ENCODE measurements at regions of chr1 and their contacts with region 1.

Region 1: DNA sequence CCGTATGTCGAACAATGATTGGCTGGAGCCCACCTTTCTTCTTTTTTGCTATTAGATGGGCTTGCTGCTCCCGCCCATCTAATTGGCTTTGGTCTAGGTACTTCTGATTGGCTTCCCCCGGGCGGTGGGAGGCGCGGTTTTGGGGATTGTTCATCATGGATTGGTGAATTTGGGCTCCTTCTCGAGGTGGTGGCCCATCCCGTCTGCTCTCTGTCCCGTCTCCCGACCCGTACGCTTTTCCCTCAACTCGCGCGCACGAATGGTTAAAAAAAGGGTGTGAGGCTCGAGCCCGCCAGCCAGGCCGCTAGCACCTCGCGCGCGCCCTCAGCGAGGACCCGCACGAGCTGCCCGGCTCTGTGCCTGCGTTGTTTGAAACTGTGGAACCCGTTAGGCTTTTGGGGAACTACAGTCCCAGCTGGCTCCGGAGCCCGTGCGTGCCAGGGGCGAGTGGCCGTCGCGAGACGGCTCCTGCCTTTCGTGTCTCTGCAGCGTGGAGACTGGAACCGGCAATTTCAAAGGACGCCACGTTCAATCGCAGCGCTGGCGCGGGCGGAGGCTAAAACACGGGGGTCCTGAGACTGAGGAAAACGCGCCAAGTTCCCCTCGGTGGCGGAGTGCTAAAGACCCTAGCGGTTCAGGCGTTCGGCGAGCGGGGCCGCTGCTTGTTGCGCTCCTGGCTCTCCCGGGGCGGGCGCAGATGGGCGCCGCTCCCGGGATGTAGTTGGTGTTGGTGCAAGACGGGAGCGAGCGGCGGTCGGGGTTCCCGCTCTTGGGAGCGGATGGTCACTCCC is at the start of gene USP1:
- DNase-seq: peak; percentile 86
- ATAC-seq: peak; percentile 82
- H3K4me3 Mint-ChIP-seq: peak within 1 kb of the TSS; percentile 96
- H3K27ac Mint-ChIP-seq: peak within 1 kb of the TSS; percentile 99
- H3K4me1 Mint-ChIP-seq: peaks cover 57% of the 10 kb centered on the region
- H3K27me3 Mint-ChIP-seq: no peaks in the 10 kb centered on the region
- CTCF ChIP-seq: no peak
- total RNA-seq, gene USP1: 32.1 and 33.3 TPM in 2 replicates

Region 2: DNA sequence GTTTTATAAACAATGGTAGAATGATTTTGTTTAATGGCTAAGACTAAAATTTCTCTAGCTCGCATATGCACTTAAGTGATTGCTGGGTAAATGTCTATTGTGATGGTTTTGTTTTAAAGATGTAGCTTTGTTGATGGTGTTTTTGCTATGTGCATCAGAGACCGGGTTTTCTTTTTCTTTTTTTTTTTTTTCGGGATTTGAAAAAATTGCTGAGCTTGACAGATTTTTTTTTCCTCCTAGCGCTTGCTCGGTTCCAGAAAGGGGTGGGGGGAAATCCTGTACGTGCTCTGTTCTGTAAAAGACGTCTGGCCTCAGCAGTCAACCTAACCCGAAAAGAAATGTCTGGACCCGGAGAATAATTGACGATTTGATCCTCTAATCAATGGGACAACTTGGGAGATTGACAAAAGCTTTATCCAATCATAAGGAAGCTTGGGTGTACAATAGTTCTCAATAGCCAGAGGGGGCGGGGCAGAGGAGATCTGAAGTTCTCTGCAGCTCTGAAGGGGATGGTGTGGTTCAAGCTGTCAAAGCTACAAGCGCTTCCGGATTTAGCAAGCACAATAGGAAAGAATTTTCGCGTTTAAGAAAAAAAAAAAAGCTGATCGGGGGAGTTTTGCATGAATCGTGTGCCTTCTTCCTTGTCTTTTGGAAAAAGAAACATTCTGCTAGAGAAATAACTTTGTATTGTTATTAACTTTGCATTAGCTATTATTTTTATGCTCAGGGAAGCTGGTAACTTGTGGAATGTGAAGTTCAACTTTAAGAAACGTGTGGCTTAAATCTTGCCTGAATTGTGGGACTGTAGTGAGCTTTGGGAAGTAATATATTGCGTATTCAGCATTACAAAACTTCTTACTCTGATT is 1358.8 kb before region 1 on chr1:
- CTCF ChIA-PET with region 1: no interaction called
- POLR2A ChIA-PET with region 1: no interaction called
- intact Hi-C with region 1: loop called (anchors 1 kb)
- DNase-seq: peak; percentile 38
- ATAC-seq: peak; percentile 62
- H3K4me3 Mint-ChIP-seq: peak overlapping the region; percentile 95
- H3K27ac Mint-ChIP-seq: peak overlapping the region; percentile 90
- H3K4me1 Mint-ChIP-seq: peaks cover 32% of the 10 kb centered on the region
- H3K27me3 Mint-ChIP-seq: peaks cover 33% of the 10 kb centered on the region
- CTCF ChIP-seq: no peak

Region 3: GRCh38 chr1:62424411-62424810 is 12.2 kb before region 1 on chr1:
- CTCF ChIA-PET with region 1: no interaction called
- POLR2A ChIA-PET with region 1: interaction called, 11 read pairs
- intact Hi-C with region 1: no loop called
- DNase-seq: no peak
- ATAC-seq: no peak
- H3K4me3 Mint-ChIP-seq: no peak overlapping the region
- H3K27ac Mint-ChIP-seq: no peak overlapping the region
- H3K4me1 Mint-ChIP-seq: no peaks in the 10 kb centered on the region
- H3K27me3 Mint-ChIP-seq: no peaks in the 10 kb centered on the region
- CTCF ChIP-seq: no peak

Region 4: GRCh38 chr1:62687903-62688686 is 251.4 kb after region 1 on chr1 and contains the start of gene DOCK7:
- CTCF ChIA-PET with region 1: no interaction called
- POLR2A ChIA-PET with region 1: no interaction called
- intact Hi-C with region 1: loop called (anchors 1 kb)
- DNase-seq: peak; percentile 55
- ATAC-seq: peak; percentile 72
- H3K4me3 Mint-ChIP-seq: peak within 1 kb of the TSS; percentile 89
- H3K27ac Mint-ChIP-seq: peak within 1 kb of the TSS; percentile 76
- H3K4me1 Mint-ChIP-seq: peaks cover 23% of the 10 kb centered on the region
- H3K27me3 Mint-ChIP-seq: no peaks in the 10 kb centered on the region
- CTCF ChIP-seq: no peak
- total RNA-seq, gene DOCK7: 13.4 and 18.0 TPM in 2 replicates

Region 5: GRCh38 chr1:62800825-62801306 is 364.2 kb after region 1 on chr1:
- CTCF ChIA-PET with region 1: no interaction called
- POLR2A ChIA-PET with region 1: interaction called, 11 read pairs
- intact Hi-C with region 1: loop called (anchors 2 kb)
- DNase-seq: no peak
- ATAC-seq: peak; percentile 98
- H3K4me3 Mint-ChIP-seq: peak overlapping the region; percentile 78
- H3K27ac Mint-ChIP-seq: peak overlapping the region; percentile 95
- H3K4me1 Mint-ChIP-seq: peaks cover 61% of the 10 kb centered on the region
- H3K27me3 Mint-ChIP-seq: no peaks in the 10 kb centered on the region
- CTCF ChIP-seq: no peak

Region 6: GRCh38 chr1:63522891-63523728 is 1086.4 kb after region 1 on chr1 and contains the starts of genes EFCAB7 and ITGB3BP:
- CTCF ChIA-PET with region 1: no interaction called
- POLR2A ChIA-PET with region 1: interaction called, 4 read pairs
- intact Hi-C with region 1: loop called (anchors 1 kb)
- DNase-seq: peak; percentile 78
- ATAC-seq: peak; percentile 87
- H3K4me3 Mint-ChIP-seq: peak within 1 kb of the TSS; percentile 97
- H3K27ac Mint-ChIP-seq: peak within 1 kb of the TSS; percentile 98
- H3K4me1 Mint-ChIP-seq: peaks cover 22% of the 10 kb centered on the region
- H3K27me3 Mint-ChIP-seq: no peaks in the 10 kb centered on the region
- CTCF ChIP-seq: no peak
- total RNA-seq, gene EFCAB7: 7.5 and 8.6 TPM in 2 replicates
- total RNA-seq, gene ITGB3BP: 24.9 and 27.0 TPM in 2 replicates

Measured in activated B cell treated with CpG ODN at 0.5 μM for 24 hours (primary cell).